Calu3 (cell line): ENCODE measurements at regions of chr16 and their contacts with region 1.

Region 1: GRCh38 chr16:57341441-57342303 is 16.9 kb upstream of the CCL22 start:
- DNase-seq: peak; percentile 91
- H3K4me3 Mint-ChIP-seq: peak overlapping the region; percentile 9
- H3K27ac Mint-ChIP-seq: peak overlapping the region; percentile 71
- H3K4me1 Mint-ChIP-seq: peaks cover 55% of the 10 kb centered on the region
- H3K27me3 Mint-ChIP-seq: peaks cover under 1% of the 10 kb centered on the region
- CTCF ChIP-seq: no peak

Region 2: GRCh38 chr16:57314161-57314785 is 27.4 kb before region 1 on chr16:
- CTCF ChIA-PET with region 1: no interaction called
- intact Hi-C with region 1: loop called (anchors 1 kb)
- DNase-seq: no peak
- H3K4me3 Mint-ChIP-seq: no peak overlapping the region
- H3K27ac Mint-ChIP-seq: peak overlapping the region; percentile 38
- H3K4me1 Mint-ChIP-seq: peaks cover 48% of the 10 kb centered on the region
- H3K27me3 Mint-ChIP-seq: no peaks in the 10 kb centered on the region
- CTCF ChIP-seq: no peak

Region 3: GRCh38 chr16:57358527-57359095 is 16.9 kb after region 1 on chr16 and contains the start of gene CCL22:
- CTCF ChIA-PET with region 1: no interaction called
- intact Hi-C with region 1: no loop called
- DNase-seq: no peak
- H3K4me3 Mint-ChIP-seq: no peak within 1 kb of the TSS
- H3K27ac Mint-ChIP-seq: peak within 1 kb of the TSS; percentile 6
- H3K4me1 Mint-ChIP-seq: peaks cover 32% of the 10 kb centered on the region
- H3K27me3 Mint-ChIP-seq: no peaks in the 10 kb centered on the region
- CTCF ChIP-seq: no peak
- total RNA-seq, gene CCL22: 2.6 and 4.5 TPM in 2 replicates

Region 4: DNA sequence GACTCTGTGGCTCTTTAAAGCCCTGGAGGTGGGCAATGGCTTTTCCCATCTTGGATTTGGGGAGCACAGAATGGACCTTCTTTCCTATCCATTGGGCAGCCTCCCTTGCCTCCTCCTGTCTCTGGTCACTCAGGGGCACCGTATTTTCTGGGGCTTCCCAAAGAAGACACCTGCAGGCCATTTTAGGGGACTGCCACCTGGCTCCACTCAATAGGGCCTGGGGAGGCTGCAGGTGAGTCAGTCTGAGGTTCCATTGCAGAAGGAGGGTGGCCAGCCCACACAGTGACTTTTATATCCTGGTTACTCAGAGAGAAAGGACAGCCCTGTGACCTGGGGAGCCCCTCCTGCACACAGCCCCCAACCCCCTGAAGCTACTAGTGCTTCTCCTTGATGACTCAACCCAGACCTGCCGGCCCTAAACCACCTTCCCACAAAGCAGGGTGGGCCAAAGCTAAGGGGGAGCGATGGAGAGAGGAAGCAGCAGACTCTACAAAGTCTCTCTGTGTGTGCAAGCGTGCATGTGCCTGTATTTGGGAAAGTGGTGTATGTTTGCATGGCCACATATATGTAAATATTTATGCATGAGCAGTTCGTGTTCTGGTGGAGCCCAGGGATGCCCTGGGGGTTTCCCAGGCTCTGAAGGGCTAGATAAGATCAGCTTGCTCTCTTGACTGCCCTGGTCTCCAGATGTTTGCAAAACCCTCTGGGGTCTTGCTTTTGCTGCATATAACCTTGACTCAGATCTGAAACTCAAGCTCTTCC is 35.6 kb after region 1 on chr16:
- CTCF ChIA-PET with region 1: interaction called, 6 read pairs
- intact Hi-C with region 1: loop called (anchors 5 kb)
- DNase-seq: peak; percentile 71
- H3K4me3 Mint-ChIP-seq: peak overlapping the region; percentile 28
- H3K27ac Mint-ChIP-seq: peak overlapping the region; percentile 93
- H3K4me1 Mint-ChIP-seq: peaks cover 78% of the 10 kb centered on the region
- H3K27me3 Mint-ChIP-seq: no peaks in the 10 kb centered on the region
- CTCF ChIP-seq: peak; percentile 60

Region 5: DNA sequence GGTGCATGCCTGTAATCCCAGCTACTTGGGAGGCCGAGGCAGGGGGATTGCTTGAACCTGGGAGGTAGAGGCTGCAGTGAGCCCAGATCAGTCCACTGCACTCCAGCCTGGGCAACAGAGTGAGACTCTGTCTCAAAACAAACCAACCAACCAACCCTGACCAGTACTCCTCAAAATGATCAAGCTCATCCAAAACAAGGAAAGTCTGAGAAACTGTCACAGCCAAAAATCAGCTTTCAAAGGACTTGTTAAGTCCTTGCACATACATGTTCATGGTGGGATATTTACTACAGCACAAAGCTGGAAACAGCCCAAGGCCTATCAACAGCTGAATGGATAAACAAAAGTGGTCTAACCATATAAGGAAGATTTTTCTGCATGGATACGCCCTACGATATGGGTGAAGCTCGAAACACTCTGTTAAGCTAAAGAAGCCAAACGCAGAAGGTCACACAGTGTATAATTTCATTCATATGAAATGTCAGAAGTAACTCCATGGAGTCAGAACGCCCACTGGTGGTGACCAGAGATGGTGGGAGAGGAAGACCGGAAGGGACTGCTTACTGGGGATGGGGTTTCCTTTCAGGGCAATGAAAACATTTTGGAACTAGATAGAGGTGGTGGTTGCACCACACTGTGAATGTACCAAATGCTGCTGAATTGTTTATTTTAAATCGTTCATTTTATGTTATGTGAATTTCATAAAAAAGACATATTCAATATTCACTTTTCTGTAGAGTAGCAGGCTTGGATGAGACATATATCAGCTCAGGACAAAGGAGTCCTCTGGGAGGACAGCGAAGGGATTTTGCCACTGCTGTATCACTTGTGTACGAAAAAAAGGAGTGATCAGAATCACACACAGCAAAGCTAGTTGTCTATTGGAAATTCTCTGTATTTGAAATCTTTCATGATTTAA is 80.6 kb after region 1 on chr16:
- CTCF ChIA-PET with region 1: interaction called, 24 read pairs
- intact Hi-C with region 1: no loop called
- DNase-seq: peak; percentile 79
- H3K4me3 Mint-ChIP-seq: no peak overlapping the region
- H3K27ac Mint-ChIP-seq: no peak overlapping the region
- H3K4me1 Mint-ChIP-seq: peaks cover 34% of the 10 kb centered on the region
- H3K27me3 Mint-ChIP-seq: no peaks in the 10 kb centered on the region
- CTCF ChIP-seq: peak; percentile 86